CD4-positive, alpha-beta memory T cell (primary cell): ENCODE measurements at regions of chr1 and their contacts with region 1.

Region 1: GRCh38 chr1:21270086-21270689 is 20.1 kb downstream of the ECE1 start:
- DNase-seq: peak; percentile 73 to 82 (median 79)
- H3K4me3 ChIP-seq: no peak overlapping the region
- H3K4me3 Mint-ChIP-seq: peak overlapping the region in 1 of 8 donors; percentile 16
- H3K27ac ChIP-seq: no peak overlapping the region
- H3K27ac Mint-ChIP-seq: peak overlapping the region; percentile 28 to 80 (median 73)
- H3K4me1 ChIP-seq: peaks cover 18% of the 10 kb centered on the region
- H3K4me1 Mint-ChIP-seq: peaks cover 16 to 41% (median 29%) of the 10 kb centered on the region in 4 donors
- H3K27me3 ChIP-seq: no peaks in the 10 kb centered on the region
- H3K27me3 Mint-ChIP-seq: no peaks in the 10 kb centered on the region

Region 2: GRCh38 chr1:21165646-21166045 is 104.5 kb before region 1 on chr1:
- CTCF ChIA-PET with region 1: no interaction called
- POLR2A ChIA-PET with region 1: no interaction called
- intact Hi-C with region 1: no loop called
- DNase-seq: no peak
- H3K4me3 ChIP-seq: no peak overlapping the region
- H3K4me3 Mint-ChIP-seq: peak overlapping the region in 1 of 8 donors; percentile 21
- H3K27ac ChIP-seq: no peak overlapping the region
- H3K27ac Mint-ChIP-seq: no peak overlapping the region
- H3K4me1 ChIP-seq: no peaks in the 10 kb centered on the region
- H3K4me1 Mint-ChIP-seq: peaks cover under 1 to 8% (median 4%) of the 10 kb centered on the region in 4 donors
- H3K27me3 ChIP-seq: no peaks in the 10 kb centered on the region
- H3K27me3 Mint-ChIP-seq: no peaks in the 10 kb centered on the region

Region 3: DNA sequence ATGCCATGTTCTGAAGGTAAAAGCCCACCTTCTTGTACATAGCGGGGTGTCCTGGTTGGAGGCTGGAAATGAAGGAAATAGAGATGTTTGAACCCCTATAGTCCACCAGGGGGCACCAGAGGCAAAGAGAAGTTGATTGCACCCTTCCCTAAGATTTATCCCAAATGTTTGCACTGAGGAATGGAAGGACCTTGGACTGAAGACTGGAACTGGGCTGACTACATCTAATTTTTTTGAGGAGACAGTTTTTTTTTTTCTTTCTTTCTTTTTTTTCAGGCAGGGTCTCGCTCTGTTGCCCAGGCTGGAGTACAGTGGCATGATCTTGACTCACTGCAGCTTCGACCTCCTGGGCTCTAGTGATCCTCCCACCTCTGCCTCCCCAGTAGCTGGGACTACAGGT is 38.1 kb before region 1 on chr1:
- CTCF ChIA-PET with region 1: interaction called, 34 read pairs
- POLR2A ChIA-PET with region 1: no interaction called
- intact Hi-C with region 1: no loop called
- DNase-seq: peak in 4 of 5 donors; percentile 33 to 49 (median 39)
- H3K4me3 ChIP-seq: no peak overlapping the region
- H3K4me3 Mint-ChIP-seq: no peak overlapping the region
- H3K27ac ChIP-seq: no peak overlapping the region
- H3K27ac Mint-ChIP-seq: peak overlapping the region in 4 of 7 donors; percentile 6 to 77 (median 44)
- H3K4me1 ChIP-seq: no peaks in the 10 kb centered on the region
- H3K4me1 Mint-ChIP-seq: peaks cover 0 to 2% (median 0%) of the 10 kb centered on the region in 4 donors
- H3K27me3 ChIP-seq: no peaks in the 10 kb centered on the region
- H3K27me3 Mint-ChIP-seq: no peaks in the 10 kb centered on the region

Region 4: GRCh38 chr1:21294266-21294989 is 24.2 kb after region 1 on chr1:
- CTCF ChIA-PET with region 1: interaction called, 144 read pairs
- POLR2A ChIA-PET with region 1: interaction called, 75 read pairs
- intact Hi-C with region 1: loop called (anchors 2 kb)
- DNase-seq: peak; percentile 93 to 99 (median 97)
- H3K4me3 ChIP-seq: peak overlapping the region; percentile 79 to 81
- H3K4me3 Mint-ChIP-seq: peak overlapping the region; percentile 86 to 99 (median 94)
- H3K27ac ChIP-seq: peak overlapping the region; percentile 99
- H3K27ac Mint-ChIP-seq: peak overlapping the region; percentile 96 to 100 (median 99)
- H3K4me1 ChIP-seq: peaks cover 84% of the 10 kb centered on the region
- H3K4me1 Mint-ChIP-seq: peaks cover 42 to 95% (median 69%) of the 10 kb centered on the region in 4 donors
- H3K27me3 ChIP-seq: no peaks in the 10 kb centered on the region
- H3K27me3 Mint-ChIP-seq: no peaks in the 10 kb centered on the region

Region 5: GRCh38 chr1:21334214-21335087 is 64.3 kb after region 1 on chr1:
- CTCF ChIA-PET with region 1: interaction called, 100 read pairs
- POLR2A ChIA-PET with region 1: interaction called, 7 read pairs
- intact Hi-C with region 1: loop called (anchors 1 kb)
- DNase-seq: peak; percentile 87 to 93 (median 89)
- H3K4me3 ChIP-seq: peak overlapping the region; percentile 17 to 44
- H3K4me3 Mint-ChIP-seq: peak overlapping the region; percentile 80 to 94 (median 90)
- H3K27ac ChIP-seq: peak overlapping the region; percentile 82
- H3K27ac Mint-ChIP-seq: peak overlapping the region; percentile 92 to 99 (median 98)
- H3K4me1 ChIP-seq: peaks cover 94% of the 10 kb centered on the region
- H3K4me1 Mint-ChIP-seq: peaks cover 62 to 98% (median 81%) of the 10 kb centered on the region in 4 donors
- H3K27me3 ChIP-seq: no peaks in the 10 kb centered on the region
- H3K27me3 Mint-ChIP-seq: no peaks in the 10 kb centered on the region

Region 6: DNA sequence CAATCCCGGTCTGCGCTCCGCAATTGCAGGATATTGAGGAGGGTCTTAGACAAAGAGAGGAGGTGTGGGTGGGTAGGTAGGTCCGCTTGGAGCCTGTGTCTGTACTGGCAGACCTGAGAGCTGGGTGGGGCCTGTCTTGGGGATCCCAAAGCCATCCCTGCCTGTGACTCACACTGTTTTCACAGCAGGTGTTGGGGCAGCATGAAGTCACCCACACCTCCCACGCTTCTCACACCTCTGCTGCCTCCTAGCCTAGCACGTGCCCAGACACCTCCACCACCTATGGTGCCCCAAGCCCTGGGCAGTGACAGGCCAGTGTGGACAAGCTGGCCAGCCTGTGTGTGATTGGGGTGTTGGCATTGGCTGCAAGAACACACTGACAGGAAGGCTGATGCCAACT is 85.8 kb after region 1 on chr1:
- CTCF ChIA-PET with region 1: interaction called, 19 read pairs
- POLR2A ChIA-PET with region 1: interaction called, 3 read pairs
- intact Hi-C with region 1: no loop called
- DNase-seq: no peak
- H3K4me3 ChIP-seq: no peak overlapping the region
- H3K4me3 Mint-ChIP-seq: no peak overlapping the region
- H3K27ac ChIP-seq: no peak overlapping the region
- H3K27ac Mint-ChIP-seq: peak overlapping the region in 1 of 7 donors; percentile 1
- H3K4me1 ChIP-seq: no peaks in the 10 kb centered on the region
- H3K4me1 Mint-ChIP-seq: peaks cover 0 to 4% (median under 1%) of the 10 kb centered on the region in 4 donors
- H3K27me3 ChIP-seq: no peaks in the 10 kb centered on the region
- H3K27me3 Mint-ChIP-seq: no peaks in the 10 kb centered on the region